Right lobe of liver (tissue), 6 donors: ENCODE measurements at regions of chr9 and their contacts with region 1.

Region 1: DNA sequence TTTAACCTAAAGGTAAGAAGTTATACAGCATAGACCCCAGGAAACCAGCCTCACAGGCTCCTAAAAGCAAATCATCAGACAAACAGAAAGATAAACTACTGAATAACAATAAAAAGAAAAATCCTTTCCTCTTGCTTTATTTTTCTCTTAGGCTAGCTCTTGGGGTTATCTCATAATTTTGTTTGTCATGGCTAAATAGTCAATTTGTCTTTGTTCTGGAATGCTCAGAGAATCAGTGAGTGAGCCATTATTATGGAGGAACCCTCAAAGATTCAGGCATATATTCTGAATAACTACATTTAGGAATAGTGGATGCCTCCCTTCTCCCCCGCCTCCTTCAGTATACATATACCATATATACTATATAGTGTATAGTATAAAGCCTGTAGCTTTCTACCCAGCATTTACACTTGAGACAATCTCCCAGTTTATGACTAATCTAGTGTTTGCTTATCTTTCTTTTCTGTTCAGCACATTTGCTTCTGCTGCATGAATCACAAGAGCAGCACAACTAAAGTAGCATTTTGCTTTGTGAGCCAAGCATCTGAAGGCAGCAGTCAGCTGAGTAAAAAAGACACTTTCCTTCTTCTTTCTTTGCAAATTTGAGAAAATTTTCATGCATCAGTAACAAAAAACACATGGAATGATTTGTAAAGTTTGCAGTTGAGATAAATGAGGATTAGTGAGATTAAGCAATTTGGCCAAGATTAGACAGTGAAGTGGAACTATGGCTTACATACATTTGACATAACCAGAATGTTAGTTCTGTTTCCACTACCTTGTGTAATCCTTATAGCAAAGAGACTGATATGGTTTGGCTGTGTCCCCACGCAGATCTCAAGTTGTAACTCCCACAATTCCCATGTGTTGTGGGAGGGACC is 45.3 kb upstream of the PPP3R2 start:
- DNase-seq: no peak
- ATAC-seq: peak; percentile 66 to 75 (median 70)
- H3K4me3 ChIP-seq: no peak overlapping the region
- H3K27ac ChIP-seq: peak overlapping the region in 2 of 3 donors; percentile 65 to 68
- H3K4me1 ChIP-seq: peaks cover 0 to 34% (median 11%) of the 10 kb centered on the region in 4 donors
- H3K27me3 ChIP-seq: no peaks in the 10 kb centered on the region
- CTCF ChIP-seq: no peak
- POLR2A ChIP-seq: no peak

Region 2: DNA sequence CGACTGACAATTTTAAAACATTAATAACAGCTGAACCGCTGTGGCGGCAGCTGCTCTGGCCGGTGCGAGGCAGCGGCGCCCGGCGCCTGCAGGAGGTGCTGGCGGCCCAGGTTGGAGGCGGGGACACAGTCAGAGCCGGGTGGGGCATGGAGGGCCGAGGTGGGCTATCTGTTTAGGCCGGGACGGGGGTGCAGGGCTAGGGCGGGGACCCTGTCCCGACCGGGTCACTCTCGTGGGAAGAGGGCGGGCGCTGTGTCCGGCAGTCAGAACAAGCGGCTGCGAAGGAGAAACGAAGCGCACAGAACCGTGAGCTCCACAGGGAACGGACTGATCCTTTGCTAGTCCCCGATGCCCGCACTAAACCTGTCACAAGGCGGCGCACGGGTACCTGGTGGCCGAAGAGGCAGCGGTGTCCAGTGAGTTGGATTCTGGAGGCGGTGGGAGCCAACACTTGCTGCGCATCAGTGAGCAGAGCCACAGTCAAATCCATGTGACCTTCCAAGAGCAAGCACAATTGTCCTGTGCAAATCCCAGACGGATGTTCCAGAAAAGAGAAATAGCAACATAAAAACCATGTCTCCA is 190.8 kb before region 1 on chr9:
- intact Hi-C with region 1: no loop called
- DNase-seq: peak; percentile 83 to 90 (median 89)
- ATAC-seq: peak; percentile 89 to 95 (median 92)
- H3K4me3 ChIP-seq: peak overlapping the region; percentile 50 to 70 (median 55)
- H3K27ac ChIP-seq: peak overlapping the region; percentile 67 to 82 (median 75)
- H3K4me1 ChIP-seq: peaks cover 0 to 17% (median 4%) of the 10 kb centered on the region in 4 donors
- H3K27me3 ChIP-seq: no peaks in the 10 kb centered on the region
- CTCF ChIP-seq: peak; percentile 54 to 63 (median 58)
- POLR2A ChIP-seq: peak; percentile 72

Region 3: GRCh38 chr9:101702257-101702656 is 62.2 kb after region 1 on chr9:
- intact Hi-C with region 1: loop called in 1 of 2 experiments (anchors 5 kb)
- DNase-seq: no peak
- ATAC-seq: no peak
- H3K4me3 ChIP-seq: no peak overlapping the region
- H3K27ac ChIP-seq: no peak overlapping the region
- H3K4me1 ChIP-seq: peaks cover 0 to 20% (median 4%) of the 10 kb centered on the region in 4 donors
- H3K27me3 ChIP-seq: no peaks in the 10 kb centered on the region
- CTCF ChIP-seq: no peak
- POLR2A ChIP-seq: no peak